Activated B cell treated with CpG ODN at 0.5 μM for 24 hours (primary cell): ENCODE measurements at regions of chr15 and their contacts with region 1.

Region 1: DNA sequence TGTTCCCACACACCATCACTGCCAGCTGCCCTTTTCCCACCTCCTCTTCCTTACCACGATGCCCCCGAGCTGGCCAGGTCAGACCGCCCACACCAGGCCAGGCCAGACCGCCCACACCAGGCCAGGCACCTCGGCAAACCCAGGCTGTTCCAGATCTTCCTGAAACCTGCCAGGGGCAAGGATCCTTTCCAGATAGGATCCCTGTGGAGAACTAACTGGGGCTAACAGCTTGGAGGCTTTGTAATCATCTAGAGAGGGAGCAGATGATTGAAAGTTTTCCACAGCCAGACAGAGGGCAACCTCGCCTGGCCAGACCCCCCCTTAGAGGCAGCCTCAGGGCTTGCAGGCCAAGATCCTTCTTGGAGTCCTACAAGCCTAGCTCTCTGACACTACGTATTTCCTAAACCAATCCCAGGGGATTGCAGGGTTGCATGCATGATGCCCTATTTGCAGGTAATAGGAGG is 287.4 kb upstream of the TLE3 start:
- DNase-seq: no peak
- ATAC-seq: no peak
- H3K4me3 Mint-ChIP-seq: no peak overlapping the region
- H3K27ac Mint-ChIP-seq: no peak overlapping the region
- H3K4me1 Mint-ChIP-seq: peaks cover 24% of the 10 kb centered on the region
- H3K27me3 Mint-ChIP-seq: no peaks in the 10 kb centered on the region
- CTCF ChIP-seq: no peak

Region 2: GRCh38 chr15:70264014-70264582 is 121.0 kb before region 1 on chr15:
- CTCF ChIA-PET with region 1: no interaction called
- POLR2A ChIA-PET with region 1: interaction called, 5 read pairs
- intact Hi-C with region 1: loop called (anchors 5 kb)
- DNase-seq: no peak
- ATAC-seq: peak; percentile 51
- H3K4me3 Mint-ChIP-seq: peak overlapping the region; percentile 57
- H3K27ac Mint-ChIP-seq: peak overlapping the region; percentile 18
- H3K4me1 Mint-ChIP-seq: peaks cover 92% of the 10 kb centered on the region
- H3K27me3 Mint-ChIP-seq: no peaks in the 10 kb centered on the region
- CTCF ChIP-seq: no peak